CD4-positive, alpha-beta T cell (primary cell): ENCODE measurements at regions of chr9 and their contacts with region 1.

Region 1: GRCh38 chr9:129413537-129414376 is 207.1 kb downstream of the C9orf50 start:
- DNase-seq: peak; percentile 97 to 100 (median 99)
- ATAC-seq: peak; percentile 74
- H3K4me3 ChIP-seq: peak overlapping the region; percentile 63
- H3K4me3 Mint-ChIP-seq: peak overlapping the region; percentile 95
- H3K27ac ChIP-seq: peak overlapping the region; percentile 95 to 96
- H3K27ac Mint-ChIP-seq: peak overlapping the region; percentile 99
- H3K4me1 ChIP-seq: peaks cover 37% of the 10 kb centered on the region
- H3K4me1 Mint-ChIP-seq: peaks cover 38% of the 10 kb centered on the region
- H3K27me3 ChIP-seq: no peaks in the 10 kb centered on the region
- H3K27me3 Mint-ChIP-seq: no peaks in the 10 kb centered on the region
- CTCF ChIP-seq: no peak

Region 2: DNA sequence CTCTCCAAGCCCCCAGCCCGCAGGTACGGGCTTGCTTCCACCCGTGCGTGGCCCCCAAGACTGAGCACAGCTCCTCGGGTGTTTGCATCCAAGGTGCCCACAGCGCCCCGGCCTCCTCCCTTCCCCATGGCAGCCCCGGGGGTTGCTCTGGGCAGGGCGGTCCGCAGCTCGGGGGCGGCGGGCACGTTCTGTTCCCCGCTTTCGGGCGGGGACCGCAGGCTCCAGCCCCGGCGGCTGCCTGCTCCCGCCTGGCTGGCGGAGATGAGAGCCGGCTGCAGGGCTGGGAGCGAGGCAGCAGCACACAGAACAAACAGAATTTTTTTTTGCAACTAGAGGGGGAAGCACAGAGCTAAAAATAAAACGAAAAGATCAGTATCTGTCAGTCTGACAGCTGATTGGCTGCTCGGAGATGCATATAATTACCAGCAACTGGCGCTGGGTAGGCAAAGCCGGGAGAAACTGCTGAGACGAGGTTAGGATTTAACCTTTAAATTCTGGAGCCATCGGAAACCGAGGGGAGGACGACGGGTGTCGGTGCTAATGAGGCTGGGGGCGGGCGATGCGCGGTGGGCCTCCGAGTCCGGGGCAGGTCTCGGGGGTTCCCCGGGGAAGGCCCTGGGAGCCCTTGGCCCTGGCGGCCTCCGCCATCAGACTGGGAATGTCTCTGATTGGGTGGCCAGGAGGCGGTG is 93.0 kb before region 1 on chr9:
- CTCF ChIA-PET with region 1: no interaction called
- POLR2A ChIA-PET with region 1: interaction called, 3 read pairs
- intact Hi-C with region 1: loop called in 1 of 2 experiments (anchors 5 kb)
- DNase-seq: peak; percentile 16 to 85 (median 42)
- ATAC-seq: peak; percentile 97
- H3K4me3 ChIP-seq: peak overlapping the region; percentile 46
- H3K4me3 Mint-ChIP-seq: peak overlapping the region; percentile 74
- H3K27ac ChIP-seq: peak overlapping the region in 1 of 2 donors; percentile 50
- H3K27ac Mint-ChIP-seq: peak overlapping the region; percentile 67
- H3K4me1 ChIP-seq: peaks cover 24% of the 10 kb centered on the region
- H3K4me1 Mint-ChIP-seq: peaks cover 17% of the 10 kb centered on the region
- H3K27me3 ChIP-seq: no peaks in the 10 kb centered on the region
- H3K27me3 Mint-ChIP-seq: no peaks in the 10 kb centered on the region
- CTCF ChIP-seq: peak; percentile 25

Region 3: GRCh38 chr9:129383561-129384416 is 30.0 kb before region 1 on chr9:
- CTCF ChIA-PET with region 1: no interaction called
- POLR2A ChIA-PET with region 1: interaction called, 7 read pairs
- intact Hi-C with region 1: loop called in 1 of 2 experiments (anchors 1 kb)
- DNase-seq: peak; percentile 54 to 89 (median 73)
- ATAC-seq: peak; percentile 93
- H3K4me3 ChIP-seq: peak overlapping the region; percentile 66
- H3K4me3 Mint-ChIP-seq: peak overlapping the region; percentile 84
- H3K27ac ChIP-seq: peak overlapping the region; percentile 79 to 85
- H3K27ac Mint-ChIP-seq: peak overlapping the region; percentile 83
- H3K4me1 ChIP-seq: peaks cover 21% of the 10 kb centered on the region
- H3K4me1 Mint-ChIP-seq: peaks cover 10% of the 10 kb centered on the region
- H3K27me3 ChIP-seq: no peaks in the 10 kb centered on the region
- H3K27me3 Mint-ChIP-seq: no peaks in the 10 kb centered on the region
- CTCF ChIP-seq: no peak

Region 4: GRCh38 chr9:129436751-129437625 is 23.2 kb after region 1 on chr9:
- CTCF ChIA-PET with region 1: no interaction called
- POLR2A ChIA-PET with region 1: interaction called, 13 read pairs
- intact Hi-C with region 1: loop called in 1 of 2 experiments (anchors 2 kb)
- DNase-seq: peak in 11 of 14 experiments; percentile 31 to 75 (median 45)
- ATAC-seq: peak; percentile 75
- H3K4me3 ChIP-seq: peak overlapping the region; percentile 59
- H3K4me3 Mint-ChIP-seq: peak overlapping the region; percentile 92
- H3K27ac ChIP-seq: no peak overlapping the region
- H3K27ac Mint-ChIP-seq: peak overlapping the region; percentile 13
- H3K4me1 ChIP-seq: peaks cover 23% of the 10 kb centered on the region
- H3K4me1 Mint-ChIP-seq: peaks cover 26% of the 10 kb centered on the region
- H3K27me3 ChIP-seq: peaks cover 20 to 21% of the 10 kb centered on the region in 2 experiments
- H3K27me3 Mint-ChIP-seq: peaks cover 59% of the 10 kb centered on the region
- CTCF ChIP-seq: no peak

Region 5: GRCh38 chr9:129487642-129488409 is 74.1 kb after region 1 on chr9:
- CTCF ChIA-PET with region 1: no interaction called
- POLR2A ChIA-PET with region 1: no interaction called
- intact Hi-C with region 1: loop called (anchors 2 kb)
- DNase-seq: peak in 13 of 14 experiments; percentile 34 to 79 (median 47)
- ATAC-seq: peak; percentile 13
- H3K4me3 ChIP-seq: peak overlapping the region; percentile 56
- H3K4me3 Mint-ChIP-seq: peak overlapping the region; percentile 83
- H3K27ac ChIP-seq: peak overlapping the region; percentile 77 to 87
- H3K27ac Mint-ChIP-seq: peak overlapping the region; percentile 94
- H3K4me1 ChIP-seq: peaks cover 83% of the 10 kb centered on the region
- H3K4me1 Mint-ChIP-seq: peaks cover 63% of the 10 kb centered on the region
- H3K27me3 ChIP-seq: no peaks in the 10 kb centered on the region
- H3K27me3 Mint-ChIP-seq: peaks cover 5% of the 10 kb centered on the region
- CTCF ChIP-seq: no peak